A549 (cell line): ENCODE measurements at regions of chr1 and their contacts with region 1.

Region 1: GRCh38 chr1:111747282-111747734 is 8.1 kb upstream of the INKA2 start:
- DNase-seq: peak; percentile 60 to 83
- ATAC-seq: peak; percentile 88 to 96
- H3K4me3 ChIP-seq: no peak overlapping the region
- H3K27ac ChIP-seq: no peak overlapping the region
- H3K4me1 ChIP-seq: no peaks in the 10 kb centered on the region
- CTCF ChIP-seq: peak; percentile 83
- EP300 ChIP-seq: no peak
- POLR2A ChIP-seq: no peak
- RAD21 ChIP-seq: peak; percentile 52 to 60

Region 2: DNA sequence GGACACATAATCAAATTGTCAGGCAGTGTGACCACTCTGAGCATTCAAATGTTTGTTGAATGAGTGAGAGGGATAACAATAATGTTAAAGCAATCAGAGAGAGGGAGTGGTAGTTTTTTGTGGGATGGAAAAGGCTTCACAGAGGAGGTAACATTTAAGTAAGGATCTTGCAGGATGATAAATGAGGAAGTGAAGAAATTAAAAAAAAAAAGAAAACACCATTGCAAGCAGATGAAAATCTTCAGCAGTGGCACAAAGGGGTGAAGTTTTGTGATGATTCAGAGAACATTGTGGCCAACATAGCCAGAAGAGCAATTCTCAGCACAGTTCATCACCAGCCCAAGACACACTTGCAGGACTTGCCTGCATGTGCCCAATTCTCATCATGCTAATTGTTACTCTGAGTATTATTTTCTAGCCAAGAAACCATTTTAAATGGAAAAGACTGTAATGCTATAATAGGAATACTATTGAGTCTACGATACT is 354.8 kb before region 1 on chr1:
- CTCF ChIA-PET with region 1: no interaction called
- POLR2A ChIA-PET with region 1: no interaction called
- DNase-seq: no peak
- ATAC-seq: no peak
- H3K4me3 ChIP-seq: no peak overlapping the region
- H3K27ac ChIP-seq: no peak overlapping the region
- H3K4me1 ChIP-seq: no peaks in the 10 kb centered on the region
- CTCF ChIP-seq: no peak
- EP300 ChIP-seq: no peak
- POLR2A ChIP-seq: no peak
- RAD21 ChIP-seq: no peak

Region 3: GRCh38 chr1:111481387-111482221 is 265.7 kb before region 1 on chr1:
- CTCF ChIA-PET with region 1: interaction called, 12 read pairs
- POLR2A ChIA-PET with region 1: no interaction called
- DNase-seq: peak; percentile 31 to 43
- ATAC-seq: peak; percentile 93 to 97
- H3K4me3 ChIP-seq: no peak overlapping the region
- H3K27ac ChIP-seq: no peak overlapping the region
- H3K4me1 ChIP-seq: no peaks in the 10 kb centered on the region
- CTCF ChIP-seq: peak; percentile 51
- EP300 ChIP-seq: no peak
- POLR2A ChIP-seq: no peak
- RAD21 ChIP-seq: peak; percentile 73 to 83

Region 4: DNA sequence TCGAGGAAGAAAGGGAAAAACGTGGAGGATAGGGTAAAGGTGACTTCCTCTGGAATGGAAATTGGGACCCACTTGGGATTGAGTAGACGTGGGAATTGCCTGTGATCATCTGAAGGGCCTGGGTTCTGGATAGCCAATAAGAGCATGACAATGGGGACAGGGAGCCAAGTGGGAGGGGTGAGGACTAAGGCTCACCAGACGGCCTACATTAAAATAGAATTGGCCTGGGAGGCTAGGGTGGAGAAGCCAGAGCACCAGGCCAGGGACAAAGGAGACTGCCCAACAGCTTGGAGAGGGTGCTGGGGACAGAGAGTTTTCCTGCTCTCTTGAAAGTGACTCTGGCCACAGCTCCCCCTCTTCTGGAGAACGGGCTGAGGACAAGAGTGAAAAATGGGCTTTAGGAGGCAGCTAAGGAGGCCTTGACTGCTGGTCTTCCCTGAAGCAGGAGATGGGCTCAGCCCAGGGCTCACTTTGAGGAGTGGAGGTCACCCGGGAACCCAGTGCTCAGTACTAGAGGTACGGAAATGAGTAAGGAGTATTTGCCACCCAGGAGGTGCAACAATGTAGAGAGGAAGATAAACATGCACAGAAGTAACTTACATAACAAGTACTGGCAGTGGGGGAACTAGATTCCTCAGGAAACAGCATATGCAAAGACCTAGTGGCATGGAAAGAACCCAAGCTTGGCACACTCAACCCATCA is 26.9 kb before region 1 on chr1:
- CTCF ChIA-PET with region 1: interaction called, 26 read pairs
- POLR2A ChIA-PET with region 1: no interaction called
- DNase-seq: no peak
- ATAC-seq: no peak
- H3K4me3 ChIP-seq: no peak overlapping the region
- H3K27ac ChIP-seq: no peak overlapping the region
- H3K4me1 ChIP-seq: peaks cover 4% of the 10 kb centered on the region; the same call in 1 of the 3 replicates
- CTCF ChIP-seq: no peak
- EP300 ChIP-seq: no peak
- POLR2A ChIP-seq: no peak
- RAD21 ChIP-seq: no peak